K562 (cell line): ENCODE measurements at regions of chr14 and their contacts with region 1.

Region 1: GRCh38 chr14:22653012-22653621 is 9.0 kb upstream of the OR6J1 start:
- DNase-seq: peak; percentile 47 to 68 (median 58)
- ATAC-seq: peak; percentile 87
- H3K4me3 ChIP-seq: no peak overlapping the region
- H3K27ac ChIP-seq: no peak overlapping the region
- H3K4me1 ChIP-seq: no peaks in the 10 kb centered on the region; a peak in 1 of 5 replicates
- H3K27me3 ChIP-seq: no peaks in the 10 kb centered on the region
- CTCF ChIP-seq: peak; percentile 85 to 86 (median 86)
- EP300 ChIP-seq: no peak
- POLR2A ChIP-seq: no peak
- RAD21 ChIP-seq: peak; percentile 80 to 94

Region 2: DNA sequence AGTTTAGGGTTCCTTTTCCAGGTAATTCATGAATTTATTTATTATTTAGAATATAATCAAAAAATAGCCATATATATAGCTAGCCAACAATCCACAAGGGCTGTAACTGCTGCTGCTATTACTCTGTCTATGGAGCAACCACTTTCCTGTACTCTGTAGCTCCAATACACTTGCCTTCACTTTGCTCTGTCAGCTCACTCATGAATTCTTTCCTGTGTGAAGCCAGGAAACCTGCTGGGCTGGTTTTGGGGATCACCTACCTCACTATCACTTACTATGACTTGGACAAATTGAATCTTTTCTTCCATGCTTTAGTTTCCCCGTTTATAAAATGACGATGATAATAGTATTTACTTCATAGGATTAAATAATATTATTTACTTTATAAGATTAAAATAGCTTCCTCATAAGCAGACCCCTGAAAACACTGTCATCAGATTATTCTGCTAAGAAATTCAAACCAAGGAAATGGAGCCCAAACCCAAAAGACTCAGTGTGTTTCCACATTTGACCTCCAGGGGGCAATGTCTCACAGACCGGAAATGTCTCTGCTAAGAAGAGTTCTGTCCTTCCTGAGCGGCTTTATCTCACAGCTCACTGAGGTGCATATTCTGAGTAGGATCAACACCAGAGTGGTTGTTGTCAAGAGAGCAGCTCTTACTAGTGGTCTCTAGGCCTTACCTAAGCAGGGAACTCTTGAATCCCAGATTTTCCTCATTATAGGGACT is 521.2 kb before region 1 on chr14:
- CTCF ChIA-PET with region 1: no interaction called
- POLR2A ChIA-PET with region 1: no interaction called
- in situ Hi-C with region 1: no loop called
- intact Hi-C with region 1: no loop called
- DNase-seq: peak; percentile 5 to 31 (median 10)
- ATAC-seq: 0 out of 3 replicates have a peak, but pooled peaks have one; percentile 33
- H3K4me3 ChIP-seq: no peak overlapping the region
- H3K27ac ChIP-seq: no peak overlapping the region
- H3K4me1 ChIP-seq: no peaks in the 10 kb centered on the region
- H3K27me3 ChIP-seq: no peaks in the 10 kb centered on the region
- CTCF ChIP-seq: peak; percentile 46 to 55 (median 51); a peak in 5 of 6 replicates
- EP300 ChIP-seq: no peak
- POLR2A ChIP-seq: no peak
- RAD21 ChIP-seq: no peak

Region 3: GRCh38 chr14:22386924-22387775 is 266.0 kb before region 1 on chr14:
- CTCF ChIA-PET with region 1: interaction called, 6 read pairs
- POLR2A ChIA-PET with region 1: no interaction called
- in situ Hi-C with region 1: loop called (anchors 10 kb)
- intact Hi-C with region 1: loop called (anchors 10 kb)
- DNase-seq: peak; percentile 55 to 78 (median 60)
- ATAC-seq: peak; percentile 77
- H3K4me3 ChIP-seq: no peak overlapping the region
- H3K27ac ChIP-seq: no peak overlapping the region
- H3K4me1 ChIP-seq: no peaks in the 10 kb centered on the region
- H3K27me3 ChIP-seq: peaks cover 8 to 19% of the 10 kb centered on the region in 2 experiments; a peak in 3 of 5 replicates
- CTCF ChIP-seq: peak; percentile 66 to 77 (median 69)
- EP300 ChIP-seq: no peak
- POLR2A ChIP-seq: no peak
- RAD21 ChIP-seq: peak; percentile 70 to 85

Region 4: GRCh38 chr14:22570132-22570949 is 82.8 kb before region 1 on chr14:
- CTCF ChIA-PET with region 1: interaction called, 6 read pairs
- POLR2A ChIA-PET with region 1: interaction called, 3 read pairs
- in situ Hi-C with region 1: loop called (anchors 5 kb)
- intact Hi-C with region 1: loop called (anchors 1 kb)
- DNase-seq: peak; percentile 71 to 89 (median 76)
- ATAC-seq: peak; percentile 95
- H3K4me3 ChIP-seq: no peak overlapping the region
- H3K27ac ChIP-seq: no peak overlapping the region
- H3K4me1 ChIP-seq: no peaks in the 10 kb centered on the region
- H3K27me3 ChIP-seq: no peaks in the 10 kb centered on the region
- CTCF ChIP-seq: peak; percentile 77 to 99 (median 95)
- EP300 ChIP-seq: no peak
- POLR2A ChIP-seq: no peak
- RAD21 ChIP-seq: peak; percentile 86 to 91

Region 5: GRCh38 chr14:22766456-22767322 is 113.6 kb after region 1 on chr14 and contains the start of gene OXA1L:
- CTCF ChIA-PET with region 1: no interaction called
- POLR2A ChIA-PET with region 1: no interaction called
- in situ Hi-C with region 1: no loop called
- intact Hi-C with region 1: loop called (anchors 2 kb)
- DNase-seq: peak; percentile 91 to 98 (median 94)
- ATAC-seq: peak; percentile 92
- H3K4me3 ChIP-seq: peak within 1 kb of the TSS; percentile 79
- H3K27ac ChIP-seq: peak within 1 kb of the TSS; percentile 97
- H3K4me1 ChIP-seq: peaks cover 7 to 10% of the 10 kb centered on the region in 2 experiments; a peak in 4 of 5 replicates
- H3K27me3 ChIP-seq: no peaks in the 10 kb centered on the region
- CTCF ChIP-seq: no peak
- EP300 ChIP-seq: no peak
- POLR2A ChIP-seq: peak; percentile 97
- RAD21 ChIP-seq: no peak
- polyA plus RNA-seq, gene OXA1L: 137 to 166 TPM

Region 6: GRCh38 chr14:22822571-22823098 is 169.5 kb after region 1 on chr14:
- CTCF ChIA-PET with region 1: interaction called, 5 read pairs
- POLR2A ChIA-PET with region 1: interaction called, 3 read pairs
- in situ Hi-C with region 1: no loop called
- intact Hi-C with region 1: loop called (anchors 1 kb)
- DNase-seq: peak; percentile 77 to 87 (median 82)
- ATAC-seq: peak; percentile 88
- H3K4me3 ChIP-seq: no peak overlapping the region
- H3K27ac ChIP-seq: no peak overlapping the region
- H3K4me1 ChIP-seq: peaks cover 18 to 30% of the 10 kb centered on the region in 2 experiments; a peak in 4 of 5 replicates
- H3K27me3 ChIP-seq: no peaks in the 10 kb centered on the region
- CTCF ChIP-seq: peak; percentile 89 to 95 (median 91)
- EP300 ChIP-seq: 0 out of 2 replicates have a peak, but pooled peaks have one; percentile 5
- POLR2A ChIP-seq: no peak
- RAD21 ChIP-seq: peak; percentile 92 to 94

Region 7: DNA sequence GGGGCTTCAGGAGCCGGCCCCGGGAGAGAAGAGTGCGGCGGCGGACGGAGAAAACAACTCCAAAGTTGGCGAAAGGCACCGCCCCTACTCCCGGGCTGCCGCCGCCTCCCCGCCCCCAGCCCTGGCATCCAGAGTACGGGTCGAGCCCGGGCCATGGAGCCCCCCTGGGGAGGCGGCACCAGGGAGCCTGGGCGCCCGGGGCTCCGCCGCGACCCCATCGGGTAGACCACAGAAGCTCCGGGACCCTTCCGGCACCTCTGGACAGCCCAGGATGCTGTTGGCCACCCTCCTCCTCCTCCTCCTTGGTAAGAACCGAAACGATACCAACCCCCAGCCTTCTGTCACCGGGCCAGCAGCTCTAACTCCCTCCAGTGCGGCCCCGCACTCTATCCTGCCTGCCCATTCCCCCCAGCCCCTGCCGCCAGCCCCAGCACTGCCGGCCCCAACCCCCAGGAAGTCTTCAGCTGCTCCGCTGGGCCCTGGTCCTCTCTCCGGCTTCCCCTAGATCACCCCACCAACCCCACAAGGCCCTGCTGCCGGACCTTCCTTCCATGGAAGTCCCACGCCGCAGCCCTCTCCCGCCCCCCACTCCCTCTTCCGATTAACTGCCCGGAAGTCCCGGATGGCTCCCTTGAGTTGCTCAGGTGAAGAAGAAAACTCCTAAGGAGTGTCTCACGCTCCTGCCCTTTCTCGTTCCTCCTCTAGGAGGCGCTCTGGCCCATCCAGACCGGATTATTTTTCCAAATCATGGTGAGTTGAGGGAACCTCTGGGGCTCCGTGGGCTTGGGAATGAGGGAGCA is 219.1 kb after region 1 on chr14:
- CTCF ChIA-PET with region 1: no interaction called
- POLR2A ChIA-PET with region 1: no interaction called
- in situ Hi-C with region 1: no loop called
- intact Hi-C with region 1: no loop called
- DNase-seq: peak; percentile 79 to 93 (median 83)
- ATAC-seq: peak; percentile 71
- H3K4me3 ChIP-seq: peak overlapping the region; percentile 87
- H3K27ac ChIP-seq: peak overlapping the region; percentile 98
- H3K4me1 ChIP-seq: peaks cover 12 to 36% of the 10 kb centered on the region in 2 experiments
- H3K27me3 ChIP-seq: no peaks in the 10 kb centered on the region
- CTCF ChIP-seq: peak; percentile 86 to 98 (median 96)
- EP300 ChIP-seq: no peak
- POLR2A ChIP-seq: peak; percentile 30
- RAD21 ChIP-seq: peak; percentile 69 to 73